AG04449 (cell line): ENCODE measurements at regions of chr20 and their contacts with region 1.

Region 1: DNA sequence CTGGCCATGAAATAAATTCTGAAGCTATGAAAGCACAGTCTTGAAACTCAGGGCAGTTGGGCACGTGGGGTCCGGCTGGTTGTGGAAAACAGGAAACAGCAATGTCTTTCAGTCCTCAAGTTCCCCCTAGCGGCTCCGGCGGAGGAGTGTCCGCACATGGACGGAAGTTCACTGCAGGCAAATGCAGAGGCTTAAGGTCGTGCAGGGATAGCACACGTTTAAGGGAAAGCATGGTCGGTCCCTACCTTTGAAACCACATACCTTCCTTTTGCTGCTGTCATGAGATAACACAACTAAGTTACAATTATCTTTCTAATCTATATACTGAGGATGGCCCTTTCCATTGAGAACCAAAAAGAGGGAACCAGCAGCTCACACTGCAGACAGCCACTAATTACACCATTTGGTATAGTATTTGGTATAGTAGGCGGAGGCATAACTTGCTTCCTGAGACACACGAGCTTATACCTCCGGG is 52.6 kb upstream of the NFATC2 start:
- DNase-seq: peak; percentile 55
- H3K4me3 ChIP-seq: no peak overlapping the region
- CTCF ChIP-seq: peak; percentile 94

Region 2: DNA sequence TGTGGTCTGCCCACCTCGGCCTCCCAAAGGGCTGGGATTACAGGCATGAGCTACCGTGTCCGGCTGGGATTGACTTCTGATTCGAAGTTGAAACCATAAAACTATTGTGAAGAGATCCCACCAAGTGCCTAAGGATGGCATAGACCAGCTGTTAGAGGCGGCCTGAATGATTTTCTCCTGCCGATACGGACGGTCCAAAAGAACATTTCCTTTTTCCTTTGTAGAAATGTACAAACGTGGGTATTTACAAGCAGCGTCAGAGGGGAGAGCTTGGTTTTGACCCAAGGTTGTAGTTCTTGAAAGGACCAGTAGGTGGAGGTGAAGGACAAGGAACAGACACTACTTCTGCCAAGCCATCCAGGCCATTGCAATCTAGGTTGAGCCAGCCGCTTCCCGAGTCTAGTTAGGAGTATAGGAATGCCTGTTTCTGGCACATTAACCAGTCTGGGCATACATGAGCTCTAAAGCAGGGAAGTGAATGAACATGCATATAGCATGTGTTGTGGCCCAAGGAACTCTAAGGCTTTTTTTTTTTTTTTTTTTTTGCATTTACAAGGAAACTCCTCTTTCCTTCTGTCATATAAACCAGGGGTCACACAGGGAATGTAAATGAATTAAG is 607.4 kb before region 1 on chr20:
- CTCF ChIA-PET with region 1: interaction called, 63 read pairs
- POLR2A ChIA-PET with region 1: no interaction called
- DNase-seq: peak; percentile 60
- H3K4me3 ChIP-seq: no peak overlapping the region
- CTCF ChIP-seq: peak; percentile 79

Region 3: GRCh38 chr20:51326201-51326819 is 268.8 kb before region 1 on chr20:
- CTCF ChIA-PET with region 1: interaction called, 12 read pairs
- POLR2A ChIA-PET with region 1: no interaction called
- DNase-seq: no peak
- H3K4me3 ChIP-seq: no peak overlapping the region
- CTCF ChIP-seq: no peak

Region 4: GRCh38 chr20:51385646-51386530 is 209.2 kb before region 1 on chr20:
- CTCF ChIA-PET with region 1: interaction called, 206 read pairs
- POLR2A ChIA-PET with region 1: no interaction called
- DNase-seq: no peak
- H3K4me3 ChIP-seq: no peak overlapping the region
- CTCF ChIP-seq: peak; percentile 70

Region 5: GRCh38 chr20:51412333-51412871 is 182.7 kb before region 1 on chr20:
- CTCF ChIA-PET with region 1: interaction called, 11 read pairs
- POLR2A ChIA-PET with region 1: no interaction called
- DNase-seq: peak; percentile 4
- H3K4me3 ChIP-seq: no peak overlapping the region
- CTCF ChIP-seq: no peak

Region 6: DNA sequence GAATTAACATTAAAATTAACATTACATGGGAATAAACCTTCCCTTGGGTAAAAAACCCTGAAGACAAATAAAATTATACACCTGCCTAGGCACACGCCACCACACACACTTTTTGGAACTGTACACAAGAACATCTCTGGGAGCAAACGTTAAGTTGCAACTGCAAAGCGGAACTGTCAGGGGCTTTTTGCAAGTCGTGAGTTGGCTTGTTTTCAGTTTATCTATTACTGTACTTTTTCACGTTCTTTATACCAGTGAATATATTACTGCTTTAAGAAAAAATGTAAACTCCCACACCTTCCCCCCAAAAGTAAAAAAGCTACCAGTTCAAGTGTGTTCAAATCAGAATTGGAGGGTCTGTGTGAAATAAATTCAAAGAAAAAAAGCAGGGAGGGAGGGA is 13.0 kb after region 1 on chr20:
- CTCF ChIA-PET with region 1: interaction called, 24 read pairs
- POLR2A ChIA-PET with region 1: no interaction called
- DNase-seq: no peak
- H3K4me3 ChIP-seq: no peak overlapping the region
- CTCF ChIP-seq: no peak

Region 7: GRCh38 chr20:51687062-51687461 is 92.0 kb after region 1 on chr20:
- CTCF ChIA-PET with region 1: no interaction called
- POLR2A ChIA-PET with region 1: no interaction called
- DNase-seq: peak; percentile 5
- H3K4me3 ChIP-seq: no peak overlapping the region
- CTCF ChIP-seq: no peak